CD8-positive, alpha-beta memory T cell (primary cell): ENCODE measurements at regions of chr14 and their contacts with region 1.

Region 1: DNA sequence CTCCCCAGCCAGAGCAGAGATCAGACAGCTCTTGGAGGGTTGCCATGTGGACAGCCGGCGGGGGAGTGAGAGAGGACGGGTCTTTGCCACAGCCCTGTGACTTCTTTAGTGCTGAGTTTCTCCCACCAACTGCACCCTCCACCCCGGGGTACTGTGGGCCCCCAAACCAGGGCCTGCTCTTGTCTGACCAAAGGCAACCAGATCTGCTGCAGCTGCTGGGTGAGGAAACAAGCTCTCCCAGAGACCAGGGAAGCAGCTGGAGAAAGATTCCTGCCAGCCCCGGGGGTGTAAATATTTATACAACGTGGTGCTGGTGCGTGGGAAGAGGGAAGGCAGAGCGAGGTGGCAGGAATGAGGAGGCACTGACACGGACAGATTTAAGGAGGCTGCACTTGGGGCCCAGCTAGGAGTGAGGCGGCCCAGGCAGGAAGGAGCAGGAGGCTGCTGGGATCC is 14.3 kb upstream of the ZFP36L1 start:
- DNase-seq: no peak
- H3K4me3 ChIP-seq: no peak overlapping the region
- H3K4me3 Mint-ChIP-seq: no peak overlapping the region
- H3K27ac ChIP-seq: no peak overlapping the region
- H3K27ac Mint-ChIP-seq: peak overlapping the region in 3 of 8 donors; percentile 12 to 52 (median 14)
- H3K4me1 ChIP-seq: peaks cover 19% of the 10 kb centered on the region
- H3K4me1 Mint-ChIP-seq: peaks cover 15 to 42% (median 17%) of the 10 kb centered on the region in 3 donors
- H3K27me3 ChIP-seq: no peaks in the 10 kb centered on the region
- H3K27me3 Mint-ChIP-seq: no peaks in the 10 kb centered on the region

Region 2: GRCh38 chr14:67666750-67667449 is 1140.3 kb before region 1 on chr14:
- CTCF ChIA-PET with region 1: no interaction called
- POLR2A ChIA-PET with region 1: interaction called, 10 read pairs
- DNase-seq: peak in 2 of 5 donors; percentile 25 to 38
- H3K4me3 ChIP-seq: no peak overlapping the region
- H3K4me3 Mint-ChIP-seq: peak overlapping the region in 2 of 7 donors; percentile 17 to 78
- H3K27ac ChIP-seq: no peak overlapping the region
- H3K27ac Mint-ChIP-seq: peak overlapping the region in 7 of 8 donors; percentile 34 to 86 (median 63)
- H3K4me1 ChIP-seq: peaks cover 23% of the 10 kb centered on the region
- H3K4me1 Mint-ChIP-seq: peaks cover 57 to 82% (median 75%) of the 10 kb centered on the region in 3 donors
- H3K27me3 ChIP-seq: no peaks in the 10 kb centered on the region
- H3K27me3 Mint-ChIP-seq: no peaks in the 10 kb centered on the region